Activated CD4-positive, alpha-beta memory T cell treated with anti-CD3 and anti-CD28 coated beads, Interleukin-2, amount 10 ng/mL, durations not matched to agents 7 days and 5 days (primary cell): ENCODE measurements at regions of chr6 and their contacts with region 1.

Region 1: DNA sequence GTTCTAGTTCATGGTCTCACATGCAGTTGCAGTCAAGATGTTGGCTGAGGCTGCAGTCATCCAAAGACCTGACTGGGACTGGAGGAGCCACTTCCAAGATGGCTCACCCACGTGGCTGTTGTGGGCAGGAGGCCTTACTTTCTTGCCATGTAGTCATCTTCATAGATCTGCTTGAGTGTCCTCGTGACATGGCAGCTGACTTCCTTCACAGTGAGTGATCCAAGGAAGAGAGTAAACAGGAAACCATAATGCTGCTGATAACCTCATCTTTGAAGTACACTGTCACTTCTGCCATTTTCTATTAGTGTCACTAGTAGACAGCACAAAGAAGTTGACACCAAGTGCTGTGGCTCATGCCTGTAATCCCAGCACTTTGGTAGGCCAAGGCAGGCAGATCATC is 40.1 kb upstream of the AKIRIN2 start:
- DNase-seq: peak; percentile 83
- H3K4me3 Mint-ChIP-seq: no peak overlapping the region
- H3K27ac Mint-ChIP-seq: peak overlapping the region; percentile 83
- H3K4me1 Mint-ChIP-seq: peaks cover 47% of the 10 kb centered on the region
- H3K27me3 Mint-ChIP-seq: peaks cover 5% of the 10 kb centered on the region

Region 2: DNA sequence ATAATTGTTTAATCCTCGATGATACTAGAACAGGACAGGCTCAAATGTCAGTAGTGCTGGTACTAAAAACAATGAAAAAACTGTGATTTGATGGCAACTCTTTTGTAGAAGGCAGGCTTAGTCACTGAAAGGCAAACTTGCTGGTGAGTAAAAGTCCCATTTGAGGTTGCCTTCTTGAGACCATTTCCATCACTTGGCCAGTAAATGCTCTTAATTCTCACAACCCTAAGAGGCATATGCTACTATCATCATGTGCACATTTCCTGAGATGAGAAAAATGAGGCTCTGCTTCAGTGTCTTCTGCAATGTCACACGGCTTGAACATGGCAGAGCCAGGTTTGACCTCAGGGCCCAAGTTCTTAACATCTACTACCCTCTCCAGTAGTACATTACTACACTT is 50.0 kb before region 1 on chr6:
- CTCF ChIA-PET with region 1: no interaction called
- POLR2A ChIA-PET with region 1: no interaction called
- DNase-seq: no peak
- H3K4me3 Mint-ChIP-seq: no peak overlapping the region
- H3K27ac Mint-ChIP-seq: no peak overlapping the region
- H3K4me1 Mint-ChIP-seq: peaks cover 59% of the 10 kb centered on the region
- H3K27me3 Mint-ChIP-seq: no peaks in the 10 kb centered on the region

Region 3: DNA sequence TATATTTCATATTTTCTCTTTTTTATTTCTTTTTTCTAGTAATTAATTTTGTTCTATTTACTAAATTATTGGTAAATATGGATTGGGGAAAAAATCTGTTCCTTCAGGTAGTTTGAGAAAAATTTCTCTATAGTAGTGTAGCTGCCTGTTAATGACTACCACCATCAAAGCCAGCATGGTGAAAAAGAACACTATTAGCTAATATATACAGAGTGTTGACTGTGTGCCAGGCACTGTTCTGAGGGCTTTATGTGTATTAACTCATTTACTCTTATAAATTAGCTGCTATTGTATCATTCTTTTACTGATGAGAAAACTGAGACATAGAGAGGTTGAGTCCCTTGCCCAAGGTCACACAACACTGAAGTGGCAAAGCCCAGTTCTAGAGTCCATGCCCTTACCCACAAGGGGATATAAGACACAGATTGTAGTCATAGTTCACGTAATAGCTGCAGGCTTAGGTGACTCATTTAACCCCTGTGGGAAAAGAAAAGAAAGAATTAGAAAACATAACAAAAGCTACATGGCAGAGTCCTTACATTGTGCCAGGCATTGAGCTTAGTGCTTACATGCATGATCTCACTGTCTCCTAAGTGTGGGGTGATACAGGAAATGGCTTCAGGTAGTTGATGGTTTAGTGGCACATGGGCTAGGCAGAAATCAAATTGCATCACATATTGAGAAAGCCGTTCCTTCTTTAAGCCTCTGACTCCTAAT is 27.9 kb before region 1 on chr6:
- CTCF ChIA-PET with region 1: no interaction called
- POLR2A ChIA-PET with region 1: interaction called, 10 read pairs
- DNase-seq: no peak
- H3K4me3 Mint-ChIP-seq: no peak overlapping the region
- H3K27ac Mint-ChIP-seq: peak overlapping the region; percentile 63
- H3K4me1 Mint-ChIP-seq: peaks cover 34% of the 10 kb centered on the region
- H3K27me3 Mint-ChIP-seq: no peaks in the 10 kb centered on the region